ENCODE measurements at regions of chr14 and their contacts with region 1.

Region 1: GRCh38 chr14:81170104-81170828 is 50.5 kb downstream of the GTF2A1 start:
- DNase-seq: peak; percentile 92
- H3K4me3 Mint-ChIP-seq: peak overlapping the region; percentile 85
- H3K27ac Mint-ChIP-seq: peak overlapping the region; percentile 93
- H3K4me1 Mint-ChIP-seq: peaks cover 17% of the 10 kb centered on the region
- H3K27me3 Mint-ChIP-seq: no peaks in the 10 kb centered on the region

Region 2: GRCh38 chr14:80941241-80942182 is 228.8 kb before region 1 on chr14 and contains the start of gene CEP128:
- CTCF ChIA-PET with region 1: interaction called, 3 read pairs
- POLR2A ChIA-PET with region 1: no interaction called
- intact Hi-C with region 1: loop called (anchors 1 kb)
- DNase-seq: peak; percentile 92
- H3K4me3 Mint-ChIP-seq: peak within 1 kb of the TSS; percentile 88
- H3K27ac Mint-ChIP-seq: peak within 1 kb of the TSS; percentile 93
- H3K4me1 Mint-ChIP-seq: peaks cover 37% of the 10 kb centered on the region
- H3K27me3 Mint-ChIP-seq: no peaks in the 10 kb centered on the region
- total RNA-seq, gene CEP128: 19.4 to 22.8 TPM

Region 3: GRCh38 chr14:80987235-80988032 is 182.8 kb before region 1 on chr14:
- CTCF ChIA-PET with region 1: interaction called, 41 read pairs
- POLR2A ChIA-PET with region 1: no interaction called
- intact Hi-C with region 1: no loop called
- DNase-seq: peak; percentile 72
- H3K4me3 Mint-ChIP-seq: no peak overlapping the region
- H3K27ac Mint-ChIP-seq: no peak overlapping the region
- H3K4me1 Mint-ChIP-seq: no peaks in the 10 kb centered on the region
- H3K27me3 Mint-ChIP-seq: peaks cover 9% of the 10 kb centered on the region

Region 4: GRCh38 chr14:80996049-80996901 is 174.0 kb before region 1 on chr14:
- CTCF ChIA-PET with region 1: interaction called, 68 read pairs
- POLR2A ChIA-PET with region 1: no interaction called
- intact Hi-C with region 1: loop called (anchors 1 kb)
- DNase-seq: peak; percentile 20
- H3K4me3 Mint-ChIP-seq: no peak overlapping the region
- H3K27ac Mint-ChIP-seq: no peak overlapping the region
- H3K4me1 Mint-ChIP-seq: peaks cover 7% of the 10 kb centered on the region
- H3K27me3 Mint-ChIP-seq: peaks cover 15% of the 10 kb centered on the region

Region 5: GRCh38 chr14:81153187-81153586 is 17.1 kb before region 1 on chr14:
- CTCF ChIA-PET with region 1: interaction called, 4 read pairs
- POLR2A ChIA-PET with region 1: interaction called, 3 read pairs
- intact Hi-C with region 1: loop called (anchors 2 kb)
- DNase-seq: no peak
- H3K4me3 Mint-ChIP-seq: no peak overlapping the region
- H3K27ac Mint-ChIP-seq: no peak overlapping the region
- H3K4me1 Mint-ChIP-seq: peaks cover 11% of the 10 kb centered on the region
- H3K27me3 Mint-ChIP-seq: peaks cover 2% of the 10 kb centered on the region

Region 6: DNA sequence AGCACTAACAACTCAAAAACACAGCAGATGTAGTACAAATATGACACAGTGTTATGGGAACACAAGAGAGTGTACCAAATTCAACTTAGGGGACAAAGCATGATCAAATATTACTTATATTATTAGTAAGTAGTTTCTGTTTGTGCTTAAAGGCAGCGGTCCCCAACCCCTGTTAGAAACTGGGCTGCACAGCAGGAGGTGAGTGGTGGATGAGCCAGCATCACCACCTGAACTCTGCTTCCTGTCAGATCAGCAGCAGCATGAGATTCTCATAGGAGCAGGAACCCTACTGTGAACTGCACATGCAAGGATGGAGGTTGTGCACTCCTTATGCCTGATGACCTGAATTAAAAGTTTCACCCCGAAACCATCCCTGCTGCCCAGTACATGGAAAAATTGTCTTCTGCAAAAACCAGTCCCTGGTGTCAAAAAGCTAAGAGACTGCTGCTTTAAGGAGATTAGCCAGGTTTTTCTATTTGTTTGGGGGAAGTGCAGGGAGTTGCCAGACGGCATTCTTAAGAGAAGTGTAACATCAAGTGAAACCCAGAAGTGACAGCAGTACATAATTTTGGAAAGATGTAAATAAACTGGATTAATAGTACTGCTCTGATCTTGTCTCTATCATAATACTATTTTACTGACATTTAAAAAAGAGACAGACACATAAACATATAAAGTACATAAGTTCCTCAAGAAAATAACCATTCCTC is 23.8 kb after region 1 on chr14:
- CTCF ChIA-PET with region 1: interaction called, 8 read pairs
- POLR2A ChIA-PET with region 1: interaction called, 3 read pairs
- intact Hi-C with region 1: loop called (anchors 2 kb)
- DNase-seq: peak; percentile 61
- H3K4me3 Mint-ChIP-seq: no peak overlapping the region
- H3K27ac Mint-ChIP-seq: no peak overlapping the region
- H3K4me1 Mint-ChIP-seq: peaks cover 41% of the 10 kb centered on the region
- H3K27me3 Mint-ChIP-seq: no peaks in the 10 kb centered on the region

Region 7: GRCh38 chr14:81464247-81465002 is 294.2 kb after region 1 on chr14:
- CTCF ChIA-PET with region 1: interaction called, 4 read pairs
- POLR2A ChIA-PET with region 1: no interaction called
- intact Hi-C with region 1: loop called (anchors 1 kb)
- DNase-seq: peak; percentile 52
- H3K4me3 Mint-ChIP-seq: peak overlapping the region; percentile 73
- H3K27ac Mint-ChIP-seq: peak overlapping the region; percentile 63
- H3K4me1 Mint-ChIP-seq: peaks cover 3% of the 10 kb centered on the region
- H3K27me3 Mint-ChIP-seq: peaks cover 1% of the 10 kb centered on the region

Measured in activated CD4-positive, alpha-beta memory T cell treated with anti-CD3 and anti-CD28 coated beads for 36 hours (primary cell).